ENCODE measurements at regions of chr5 and their contacts with region 1.

Region 1: DNA sequence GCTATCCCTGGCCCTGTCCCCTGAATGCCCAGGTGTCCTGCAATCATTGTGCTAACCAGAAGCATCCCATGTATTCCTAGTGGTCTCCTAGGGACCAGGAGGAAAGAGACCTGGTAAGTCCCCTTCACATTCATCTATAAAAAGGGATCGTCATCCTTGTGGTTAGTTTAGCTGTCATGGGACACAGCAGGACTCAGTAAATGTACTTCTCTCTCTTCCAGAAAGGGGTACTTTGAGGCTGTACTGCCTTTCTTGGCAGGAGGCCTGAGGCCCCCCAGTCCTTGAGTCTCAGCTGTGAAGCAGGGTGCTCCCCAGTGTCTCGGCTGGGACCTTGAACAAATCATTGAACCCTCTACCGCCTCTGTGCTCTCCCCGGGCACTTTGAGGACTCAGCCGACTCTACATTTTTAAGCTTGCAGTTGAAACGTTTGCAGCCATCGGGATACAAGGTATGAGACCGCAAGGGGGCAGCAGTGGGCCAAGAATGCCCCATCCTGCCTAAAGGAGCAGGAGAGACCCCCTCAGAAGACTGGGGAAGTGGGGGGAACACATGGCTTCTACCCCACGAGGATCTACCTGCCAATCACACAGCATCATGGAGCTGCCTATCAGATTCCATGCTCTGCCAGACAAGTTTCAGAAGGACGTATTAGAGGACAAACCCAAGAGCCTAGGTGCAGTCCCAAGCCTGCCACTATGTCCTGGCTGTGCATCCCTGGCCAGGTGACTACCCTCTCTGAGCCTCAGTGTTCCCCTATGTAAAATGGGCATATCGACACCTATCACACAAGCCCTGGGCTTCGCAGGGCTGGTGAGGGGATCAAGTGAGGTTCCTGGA is 2.4 kb upstream of the PHYKPL start:
- DNase-seq: no peak

Region 2: GRCh38 chr5:178267245-178267644 is 32.3 kb after region 1 on chr5:
- intact Hi-C with region 1: loop called (anchors 2 kb)
- DNase-seq: no peak

Region 3: DNA sequence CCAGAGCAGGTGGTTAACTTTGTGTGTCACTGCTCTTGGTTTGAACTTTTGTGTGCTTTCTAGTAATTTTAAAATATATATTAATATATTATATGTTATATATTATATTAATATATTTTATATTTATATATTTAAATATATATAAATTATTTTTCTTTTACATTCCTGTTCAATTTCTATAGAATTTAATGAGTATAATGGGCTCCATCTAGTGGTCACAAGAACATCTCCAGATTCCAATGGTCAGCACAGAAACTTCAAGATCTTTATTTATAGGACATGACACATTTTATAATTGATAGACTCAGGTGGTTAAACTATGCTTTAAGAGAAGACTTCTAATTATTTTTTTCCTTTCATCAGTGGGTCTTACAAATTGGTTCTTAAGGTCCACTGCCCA is 316.1 kb after region 1 on chr5:
- intact Hi-C with region 1: loop called (anchors 5 kb)
- DNase-seq: no peak

Region 4: DNA sequence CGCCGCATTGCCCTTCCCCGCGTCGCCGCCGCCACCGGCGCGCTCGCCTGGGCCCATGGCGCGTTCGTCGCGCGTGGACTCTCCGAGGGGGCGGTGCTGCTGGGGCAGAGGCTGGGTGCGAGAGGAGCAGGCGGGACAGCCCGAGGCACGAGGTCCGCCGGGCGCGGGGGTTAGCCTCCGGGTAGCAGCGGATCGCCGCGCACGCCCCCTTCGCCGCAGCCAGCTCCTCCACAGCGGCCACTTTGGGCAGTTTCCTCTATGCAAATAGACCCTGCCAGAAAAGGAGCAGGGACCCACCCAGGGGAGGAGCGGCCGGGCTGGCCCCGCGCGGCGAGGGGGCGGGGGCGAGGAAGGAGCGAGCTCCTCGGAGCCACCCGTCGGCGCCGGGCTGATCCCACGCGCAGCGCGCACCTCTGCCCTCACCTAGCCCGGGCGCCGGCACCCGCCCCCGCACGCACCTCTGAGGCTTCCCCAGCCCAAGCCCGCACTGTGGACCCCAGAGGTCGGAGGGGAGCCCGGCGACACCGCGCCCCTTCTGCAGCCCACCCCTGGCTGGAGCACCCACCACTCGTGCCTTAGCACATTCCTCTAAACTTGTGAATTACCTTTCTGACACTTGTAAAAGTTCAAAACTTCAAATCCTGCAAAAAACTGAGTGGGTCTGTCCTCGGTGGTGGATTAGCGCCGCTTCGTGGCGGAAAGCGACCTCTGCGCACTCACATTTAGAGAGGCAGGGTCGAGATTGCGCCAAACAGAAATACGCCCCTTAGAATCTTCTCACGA is 355.4 kb after region 1 on chr5 and contains the start of gene COL23A1:
- intact Hi-C with region 1: loop called (anchors 1 kb)
- DNase-seq: peak; percentile 90
- total RNA-seq, gene COL23A1: 16.5 TPM